ENCODE measurements at regions of chr11 and their contacts with region 1.

Region 1: GRCh38 chr11:93652161-93652597 is 9.3 kb upstream of the CEP295 start:
- DNase-seq: peak in 1 of 2 donors; percentile 30
- ATAC-seq: peak in 1 of 8 donors; percentile 17
- H3K4me3 ChIP-seq: no peak overlapping the region
- H3K27ac ChIP-seq: no peak overlapping the region
- H3K4me1 ChIP-seq: peaks cover 0 to 21% (median 0%) of the 10 kb centered on the region in 9 donors
- H3K27me3 ChIP-seq: peaks cover 0 to 22% (median 3%) of the 10 kb centered on the region in 7 donors
- CTCF ChIP-seq: peak; percentile 69 to 88 (median 82)

Region 2: GRCh38 chr11:93234602-93235207 is 417.5 kb before region 1 on chr11:
- intact Hi-C with region 1: loop called (anchors 1 to 5 kb)
- DNase-seq: peak; percentile 57 to 76
- ATAC-seq: peak; percentile 90 to 99 (median 96)
- H3K4me3 ChIP-seq: no peak overlapping the region
- H3K27ac ChIP-seq: no peak overlapping the region
- H3K4me1 ChIP-seq: peaks cover 0 to 5% (median 0%) of the 10 kb centered on the region in 9 donors
- H3K27me3 ChIP-seq: peaks cover 0 to 13% (median 0%) of the 10 kb centered on the region in 7 donors
- CTCF ChIP-seq: peak; percentile 72 to 96 (median 91)

Region 3: GRCh38 chr11:93487032-93487483 is 165.1 kb before region 1 on chr11:
- intact Hi-C with region 1: loop called in 1 of 10 experiments (anchors 10 kb)
- DNase-seq: no peak
- ATAC-seq: peak in 4 of 8 donors; percentile 22 to 57 (median 45)
- H3K4me3 ChIP-seq: no peak overlapping the region
- H3K27ac ChIP-seq: no peak overlapping the region
- H3K4me1 ChIP-seq: peaks cover 0 to 24% (median 7%) of the 10 kb centered on the region in 9 donors
- H3K27me3 ChIP-seq: no peaks in the 10 kb centered on the region
- CTCF ChIP-seq: no peak

Region 4: DNA sequence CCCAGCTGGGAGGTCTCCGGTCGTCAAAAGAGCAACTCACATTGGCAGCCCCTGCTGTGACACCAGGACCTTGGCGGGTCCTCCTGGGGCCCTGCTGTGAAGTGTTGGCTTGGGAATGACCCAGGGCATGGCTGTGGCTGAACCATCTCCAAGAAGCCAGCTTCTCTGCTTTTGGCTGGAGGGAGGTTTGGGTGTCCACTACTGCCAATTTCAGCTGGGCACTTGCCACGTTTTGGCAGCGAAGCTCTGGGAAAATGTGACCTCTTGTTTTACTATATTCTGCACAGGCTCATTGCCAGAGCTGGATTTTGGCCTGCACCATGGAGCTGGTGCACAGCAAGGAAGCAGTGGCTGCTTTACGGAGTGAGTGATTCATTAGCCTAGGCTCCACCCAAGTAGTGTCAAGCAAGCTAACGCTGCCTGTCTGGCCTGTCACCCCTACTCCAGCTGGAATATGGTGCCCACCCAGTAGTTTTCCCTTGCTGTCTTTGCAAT is 84.7 kb before region 1 on chr11:
- intact Hi-C with region 1: loop called in 1 of 10 experiments (anchors 10 kb)
- DNase-seq: peak; percentile 68 to 83
- ATAC-seq: peak; percentile 79 to 98 (median 95)
- H3K4me3 ChIP-seq: no peak overlapping the region
- H3K27ac ChIP-seq: peak overlapping the region in 5 of 10 donors; percentile 49 to 61 (median 57)
- H3K4me1 ChIP-seq: peaks cover 0 to 20% (median 11%) of the 10 kb centered on the region in 9 donors
- H3K27me3 ChIP-seq: no peaks in the 10 kb centered on the region
- CTCF ChIP-seq: no peak

Region 5: GRCh38 chr11:93756748-93757147 is 104.6 kb after region 1 on chr11:
- intact Hi-C with region 1: no loop called
- DNase-seq: no peak
- ATAC-seq: no peak
- H3K4me3 ChIP-seq: no peak overlapping the region
- H3K27ac ChIP-seq: no peak overlapping the region
- H3K4me1 ChIP-seq: no peaks in the 10 kb centered on the region
- H3K27me3 ChIP-seq: no peaks in the 10 kb centered on the region
- CTCF ChIP-seq: no peak

Measured in heart right ventricle (tissue), 16 donors.